ENCODE measurements at regions of chr3 and their contacts with region 1.

Region 1: GRCh38 chr3:152026033-152026556 is 152.7 kb downstream of the SUCNR1 start:
- DNase-seq: peak in 1 of 2 experiments; percentile 11
- H3K4me3 ChIP-seq: no peak overlapping the region
- H3K4me3 Mint-ChIP-seq: no peak overlapping the region
- H3K27ac Mint-ChIP-seq: no peak overlapping the region
- H3K4me1 ChIP-seq: no peaks in the 10 kb centered on the region
- H3K4me1 Mint-ChIP-seq: no peaks in the 10 kb centered on the region
- H3K27me3 ChIP-seq: no peaks in the 10 kb centered on the region
- H3K27me3 Mint-ChIP-seq: no peaks in the 10 kb centered on the region
- CTCF ChIP-seq: no peak

Region 2: GRCh38 chr3:152058856-152059255 is 32.8 kb after region 1 on chr3:
- CTCF ChIA-PET with region 1: no interaction called
- POLR2A ChIA-PET with region 1: no interaction called
- intact Hi-C with region 1: loop called (anchors 1 kb)
- DNase-seq: no peak
- H3K4me3 ChIP-seq: no peak overlapping the region
- H3K4me3 Mint-ChIP-seq: no peak overlapping the region
- H3K27ac Mint-ChIP-seq: peak overlapping the region; percentile 23
- H3K4me1 ChIP-seq: peaks cover 25% of the 10 kb centered on the region
- H3K4me1 Mint-ChIP-seq: peaks cover 25% of the 10 kb centered on the region
- H3K27me3 ChIP-seq: no peaks in the 10 kb centered on the region
- H3K27me3 Mint-ChIP-seq: no peaks in the 10 kb centered on the region
- CTCF ChIP-seq: no peak

Measured in Caco-2 (cell line).